BJ (cell line): ENCODE measurements at regions of chr5 and their contacts with region 1.

Region 1: GRCh38 chr5:160418561-160419457 is at the start of gene SLU7:
- DNase-seq: peak; percentile 86
- H3K4me3 ChIP-seq: peak within 1 kb of the TSS; percentile 91
- H3K27me3 ChIP-seq: no peaks in the 10 kb centered on the region
- CTCF ChIP-seq: no peak
- polyA plus RNA-seq, gene SLU7: 12.5 and 28.2 TPM in 2 replicates

Region 2: DNA sequence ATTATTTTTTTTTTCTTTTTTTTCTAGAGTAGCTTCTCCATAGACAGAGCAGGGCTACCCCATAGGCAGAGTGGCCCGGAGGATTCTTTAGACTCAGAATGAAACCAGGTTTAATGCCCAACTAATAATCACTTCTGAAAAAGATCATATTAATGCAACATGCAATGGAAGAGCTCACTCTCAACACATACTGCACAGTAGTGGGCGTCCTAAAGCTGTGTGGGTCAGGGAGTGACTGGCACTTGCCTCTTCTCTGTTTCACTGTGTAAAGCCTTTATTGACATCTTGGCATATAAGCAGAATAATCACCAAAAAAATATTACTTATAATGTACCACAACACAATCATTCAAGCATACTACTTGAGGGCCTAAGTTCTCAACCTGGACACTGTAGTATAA is 310.7 kb before region 1 on chr5:
- CTCF ChIA-PET with region 1: no interaction called
- POLR2A ChIA-PET with region 1: interaction called, 11 read pairs
- DNase-seq: no peak
- H3K4me3 ChIP-seq: no peak overlapping the region
- H3K27me3 ChIP-seq: no peaks in the 10 kb centered on the region
- CTCF ChIP-seq: no peak

Region 3: DNA sequence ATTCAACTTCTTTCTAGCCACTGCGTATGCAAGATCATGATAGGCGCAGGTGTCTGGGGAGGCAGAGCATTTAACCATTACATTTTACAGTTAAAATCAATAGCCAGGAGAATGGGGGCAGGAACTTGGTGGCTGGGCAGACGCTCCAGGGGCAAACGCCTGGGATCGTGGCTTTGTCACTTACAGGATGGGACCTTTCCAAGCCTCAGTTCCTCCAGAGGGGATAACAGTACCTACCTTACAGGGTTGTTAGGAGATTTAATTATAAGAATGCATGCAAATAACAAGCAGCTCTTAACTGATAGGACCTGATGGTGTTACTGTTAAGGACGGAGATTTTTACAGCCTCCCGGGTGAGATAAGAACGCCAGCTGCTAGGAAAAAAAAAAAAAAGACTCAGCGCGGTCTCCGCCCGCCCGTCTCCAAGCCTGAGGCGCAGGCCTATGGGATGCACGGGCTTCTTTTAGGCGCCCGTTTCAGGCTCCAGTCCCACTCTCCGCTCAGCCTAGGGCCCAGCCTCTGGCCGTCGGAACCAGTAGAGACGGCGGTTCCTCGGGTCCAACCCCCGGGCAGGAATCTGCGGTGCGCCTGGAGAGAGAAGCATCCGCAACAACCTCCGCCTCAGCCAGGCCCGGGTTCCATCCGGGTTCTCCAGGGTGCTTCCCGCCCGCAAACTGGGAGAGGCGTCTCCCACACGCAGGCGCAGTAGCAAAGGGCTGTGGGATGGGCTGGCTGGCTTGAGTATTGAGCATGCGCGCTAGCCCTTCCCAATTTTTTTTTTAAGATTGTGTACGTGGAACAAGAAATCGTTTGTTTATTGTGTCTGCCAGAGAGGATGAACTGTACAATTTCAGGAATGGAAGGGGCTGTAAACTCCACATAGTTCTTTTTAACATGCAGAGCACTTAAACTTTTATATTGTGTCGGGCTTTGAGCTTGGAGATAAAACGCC is 19.1 kb before region 1 on chr5 and contains the start of gene FAM200C:
- CTCF ChIA-PET with region 1: no interaction called
- POLR2A ChIA-PET with region 1: interaction called, 11 read pairs
- DNase-seq: peak; percentile 71
- H3K4me3 ChIP-seq: peak within 1 kb of the TSS; percentile 70
- H3K27me3 ChIP-seq: no peaks in the 10 kb centered on the region
- CTCF ChIP-seq: no peak
- polyA plus RNA-seq, gene FAM200C: 1.6 and 2.9 TPM in 2 replicates